ENCODE measurements at regions of chr14 and their contacts with region 1.

Region 1: GRCh38 chr14:76876076-76876475 is 49.9 kb downstream of the LRRC74A start:
- DNase-seq: peak; percentile 83

Region 2: DNA sequence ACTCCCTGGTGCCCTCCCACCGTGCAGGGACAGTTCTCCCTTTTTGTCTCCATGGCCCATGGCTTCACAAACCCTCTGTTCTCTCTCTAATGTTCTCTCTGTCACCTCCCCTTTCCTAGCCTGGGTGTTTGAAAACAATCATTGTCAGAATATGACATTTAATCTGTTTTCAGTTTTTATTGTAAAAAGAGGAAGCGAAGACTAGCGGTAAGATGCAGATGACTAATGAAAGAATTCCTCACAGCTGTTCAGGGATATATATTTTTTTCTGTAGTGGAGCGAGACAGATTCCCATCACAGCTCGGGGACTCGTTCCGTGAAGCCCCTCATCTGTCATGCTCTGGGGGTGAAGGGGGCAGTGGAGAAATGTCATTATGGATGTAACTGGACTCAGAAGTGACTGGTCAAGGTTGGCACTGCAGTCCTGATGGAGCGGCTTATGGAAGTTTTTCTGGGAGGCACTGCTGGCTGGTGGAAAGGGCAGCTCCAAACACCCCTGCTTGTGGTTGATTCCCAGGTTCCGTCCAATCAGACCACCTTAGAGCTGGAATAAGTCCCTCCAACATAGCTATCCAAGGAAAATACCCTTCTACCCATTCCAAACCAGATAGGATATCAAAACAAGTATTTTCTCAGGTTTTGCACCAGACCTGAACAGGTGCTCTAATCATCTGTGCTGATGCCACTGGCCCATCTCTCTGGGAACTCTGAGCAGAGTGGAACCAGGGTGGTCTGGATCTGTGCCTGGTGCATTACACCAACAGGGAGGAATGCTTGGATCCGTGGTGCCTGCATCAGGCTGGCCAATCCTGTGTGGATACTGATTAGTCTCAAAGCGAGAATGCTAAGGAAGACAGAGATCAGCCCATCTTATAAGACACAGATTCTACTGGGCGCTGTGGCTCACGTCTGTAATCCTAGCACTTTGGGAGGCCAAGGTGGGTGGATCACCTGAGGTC is 639.6 kb before region 1 on chr14:
- in situ Hi-C with region 1: no loop called
- DNase-seq: peak; percentile 17

Region 3: DNA sequence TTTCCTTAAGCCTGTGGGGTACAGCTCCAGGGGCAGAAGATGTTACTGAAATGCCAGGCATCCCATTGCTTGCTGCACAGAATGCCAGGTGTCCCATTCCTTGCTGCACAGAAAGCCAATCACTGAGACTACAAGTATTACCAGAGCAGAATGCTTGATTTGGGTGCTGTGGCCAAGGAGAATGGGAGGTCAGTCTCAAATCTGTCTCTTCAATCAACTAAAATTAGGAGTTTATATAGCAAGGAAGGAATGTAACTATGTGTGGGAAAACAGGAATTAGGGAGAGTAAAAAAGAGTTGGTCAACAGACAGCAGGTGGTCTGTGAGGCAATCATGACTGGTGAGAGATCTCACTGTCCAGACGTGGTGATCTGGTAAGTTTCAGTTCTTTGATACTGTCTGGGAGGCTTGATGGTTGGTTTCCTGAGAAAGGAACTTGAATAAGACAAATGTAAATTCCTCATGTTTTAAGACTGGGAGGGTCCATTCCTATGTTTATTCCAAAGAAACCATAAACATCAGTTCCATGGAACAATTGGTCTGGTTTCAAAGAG is 146.0 kb before region 1 on chr14:
- in situ Hi-C with region 1: no loop called
- DNase-seq: no peak

Region 4: DNA sequence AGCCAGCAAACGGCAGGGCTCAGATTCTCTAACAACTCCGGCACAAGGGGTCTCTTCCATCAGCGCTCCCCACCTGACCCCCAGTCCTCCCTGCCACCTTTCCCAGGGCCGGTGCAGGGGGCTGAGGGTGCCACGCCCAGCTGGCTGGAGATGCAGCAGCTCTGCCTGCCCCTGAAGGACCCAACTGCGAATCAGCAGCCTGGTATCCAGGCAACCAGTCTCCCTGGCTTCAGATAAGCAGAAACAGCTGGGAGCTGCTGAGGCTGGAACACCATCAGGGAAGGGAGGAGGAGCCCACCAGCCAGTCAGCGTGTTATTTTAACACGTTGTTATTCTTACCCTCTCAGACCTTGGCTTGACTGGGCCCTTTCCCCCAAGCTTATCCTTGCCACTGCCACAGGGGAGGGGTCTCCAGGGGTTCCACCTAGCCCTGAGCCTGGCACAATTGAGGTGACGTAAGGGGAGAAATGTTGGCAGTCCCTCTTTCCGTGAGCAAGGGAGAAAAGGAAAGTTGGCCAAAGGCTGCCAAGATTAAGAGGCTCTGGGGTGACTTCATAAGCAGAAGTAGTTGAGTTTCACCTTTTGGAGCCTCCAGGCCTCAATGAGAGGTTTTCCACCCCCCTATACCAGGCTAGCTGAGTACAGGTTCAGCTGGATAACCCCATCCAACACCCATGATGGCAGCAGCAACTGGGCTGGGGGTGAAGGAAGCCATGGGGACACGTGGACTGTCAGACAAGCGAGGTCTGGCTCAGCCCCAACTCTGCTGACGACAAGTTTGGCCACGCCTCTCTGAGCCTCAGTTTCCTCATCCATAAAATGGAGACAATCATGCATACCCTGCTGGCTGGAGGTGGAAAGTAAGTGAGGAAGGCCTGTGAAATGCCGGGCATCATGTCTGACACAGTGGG is 61.4 kb after region 1 on chr14:
- in situ Hi-C with region 1: no loop called
- DNase-seq: no peak

Region 5: GRCh38 chr14:77067632-77068514 is 191.8 kb after region 1 on chr14:
- in situ Hi-C with region 1: loop called (anchors 10 kb)
- DNase-seq: peak; percentile 73

Measured in KBM-7 (cell line).